ENCODE measurements at regions of chr1 and their contacts with region 1.

Region 1: DNA sequence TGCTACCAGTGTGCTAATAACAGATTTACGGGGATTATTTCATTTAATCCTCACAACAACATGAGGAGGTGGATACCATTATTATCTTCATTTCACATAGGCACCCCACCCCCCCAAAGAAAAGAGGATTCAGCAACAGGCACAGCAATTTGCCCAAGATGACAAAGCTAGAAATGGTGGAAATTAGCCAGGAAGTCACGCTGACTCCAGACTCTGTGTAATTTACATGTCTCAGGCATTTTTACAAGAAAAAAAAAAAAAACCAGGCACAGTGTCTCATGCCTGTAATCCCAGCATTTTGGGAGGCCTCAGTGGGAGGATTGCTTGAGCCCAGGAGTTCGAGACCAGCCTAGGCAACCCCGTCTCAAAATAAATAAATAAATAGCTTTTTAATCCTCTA is 37.5 kb upstream of the PRDM2 start:
- DNase-seq: no peak
- ATAC-seq: no peak
- H3K4me3 ChIP-seq: no peak overlapping the region
- H3K27ac ChIP-seq: no peak overlapping the region
- H3K4me1 ChIP-seq: no peaks in the 10 kb centered on the region
- H3K27me3 ChIP-seq: no peaks in the 10 kb centered on the region
- CTCF ChIP-seq: no peak
- POLR2A ChIP-seq: no peak
- RAD21 ChIP-seq: no peak

Region 2: GRCh38 chr1:13494025-13494424 is 168.5 kb before region 1 on chr1:
- CTCF ChIA-PET with region 1: no interaction called
- POLR2A ChIA-PET with region 1: no interaction called
- dilution Hi-C with region 1: no loop called
- in situ Hi-C with region 1: no loop called
- intact Hi-C with region 1: no loop called
- DNase-seq: no peak
- ATAC-seq: no peak
- H3K4me3 ChIP-seq: no peak overlapping the region
- H3K27ac ChIP-seq: no peak overlapping the region
- H3K4me1 ChIP-seq: no peaks in the 10 kb centered on the region
- H3K27me3 ChIP-seq: no peaks in the 10 kb centered on the region
- CTCF ChIP-seq: no peak
- POLR2A ChIP-seq: no peak
- RAD21 ChIP-seq: no peak

Region 3: GRCh38 chr1:13775459-13775858 is 113.0 kb after region 1 on chr1:
- CTCF ChIA-PET with region 1: no interaction called
- POLR2A ChIA-PET with region 1: no interaction called
- dilution Hi-C with region 1: no loop called
- in situ Hi-C with region 1: no loop called
- intact Hi-C with region 1: no loop called
- DNase-seq: peak; percentile 29
- ATAC-seq: no peak
- H3K4me3 ChIP-seq: no peak overlapping the region
- H3K27ac ChIP-seq: no peak overlapping the region
- H3K4me1 ChIP-seq: peaks cover 11% of the 10 kb centered on the region
- H3K27me3 ChIP-seq: no peaks in the 10 kb centered on the region
- CTCF ChIP-seq: no peak
- POLR2A ChIP-seq: no peak
- RAD21 ChIP-seq: no peak

Region 4: DNA sequence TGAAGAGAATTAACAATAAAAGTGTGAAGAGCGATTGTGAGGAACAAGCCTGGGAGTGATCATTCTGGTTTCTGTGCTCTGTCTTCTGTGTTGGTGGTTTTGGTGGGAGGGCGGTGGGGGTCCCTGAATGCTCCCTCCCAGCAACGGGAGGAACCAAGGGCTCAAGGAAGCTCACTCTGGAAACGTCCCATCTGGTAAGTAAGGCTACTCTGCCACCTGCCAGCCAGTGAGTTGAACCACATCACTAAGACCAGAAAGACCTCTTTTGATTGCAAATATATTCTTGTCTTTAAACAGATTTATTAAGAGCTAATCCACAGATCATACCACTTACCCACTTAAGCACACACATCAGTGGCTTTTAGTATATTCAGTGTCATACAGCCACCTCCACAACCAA is 162.5 kb after region 1 on chr1:
- CTCF ChIA-PET with region 1: no interaction called
- POLR2A ChIA-PET with region 1: no interaction called
- dilution Hi-C with region 1: no loop called
- in situ Hi-C with region 1: no loop called
- intact Hi-C with region 1: loop called (anchors 1 kb)
- DNase-seq: peak; percentile 10
- ATAC-seq: no peak
- H3K4me3 ChIP-seq: no peak overlapping the region
- H3K27ac ChIP-seq: no peak overlapping the region
- H3K4me1 ChIP-seq: no peaks in the 10 kb centered on the region
- H3K27me3 ChIP-seq: no peaks in the 10 kb centered on the region
- CTCF ChIP-seq: peak; percentile 30; the same call in 1 of the 2 replicates
- POLR2A ChIP-seq: no peak
- RAD21 ChIP-seq: peak; percentile 36

Region 5: GRCh38 chr1:13945856-13946255 is 283.4 kb after region 1 on chr1:
- CTCF ChIA-PET with region 1: no interaction called
- POLR2A ChIA-PET with region 1: no interaction called
- dilution Hi-C with region 1: no loop called
- in situ Hi-C with region 1: no loop called
- intact Hi-C with region 1: no loop called
- DNase-seq: no peak
- ATAC-seq: no peak
- H3K4me3 ChIP-seq: no peak overlapping the region
- H3K27ac ChIP-seq: no peak overlapping the region
- H3K4me1 ChIP-seq: no peaks in the 10 kb centered on the region
- H3K27me3 ChIP-seq: no peaks in the 10 kb centered on the region
- CTCF ChIP-seq: no peak
- POLR2A ChIP-seq: no peak
- RAD21 ChIP-seq: no peak

Region 6: GRCh38 chr1:14055442-14056223 is 393.1 kb after region 1 on chr1:
- CTCF ChIA-PET with region 1: no interaction called
- POLR2A ChIA-PET with region 1: no interaction called
- dilution Hi-C with region 1: no loop called
- in situ Hi-C with region 1: no loop called
- intact Hi-C with region 1: no loop called
- DNase-seq: no peak
- ATAC-seq: no peak
- H3K4me3 ChIP-seq: no peak overlapping the region
- H3K27ac ChIP-seq: no peak overlapping the region
- H3K4me1 ChIP-seq: no peaks in the 10 kb centered on the region
- H3K27me3 ChIP-seq: no peaks in the 10 kb centered on the region
- CTCF ChIP-seq: no peak
- POLR2A ChIP-seq: no peak
- RAD21 ChIP-seq: no peak

Measured in IMR-90 (cell line).